Dorsolateral prefrontal cortex (tissue), 120 donors: ENCODE measurements at regions of chr17 and their contacts with region 1.

Region 1: DNA sequence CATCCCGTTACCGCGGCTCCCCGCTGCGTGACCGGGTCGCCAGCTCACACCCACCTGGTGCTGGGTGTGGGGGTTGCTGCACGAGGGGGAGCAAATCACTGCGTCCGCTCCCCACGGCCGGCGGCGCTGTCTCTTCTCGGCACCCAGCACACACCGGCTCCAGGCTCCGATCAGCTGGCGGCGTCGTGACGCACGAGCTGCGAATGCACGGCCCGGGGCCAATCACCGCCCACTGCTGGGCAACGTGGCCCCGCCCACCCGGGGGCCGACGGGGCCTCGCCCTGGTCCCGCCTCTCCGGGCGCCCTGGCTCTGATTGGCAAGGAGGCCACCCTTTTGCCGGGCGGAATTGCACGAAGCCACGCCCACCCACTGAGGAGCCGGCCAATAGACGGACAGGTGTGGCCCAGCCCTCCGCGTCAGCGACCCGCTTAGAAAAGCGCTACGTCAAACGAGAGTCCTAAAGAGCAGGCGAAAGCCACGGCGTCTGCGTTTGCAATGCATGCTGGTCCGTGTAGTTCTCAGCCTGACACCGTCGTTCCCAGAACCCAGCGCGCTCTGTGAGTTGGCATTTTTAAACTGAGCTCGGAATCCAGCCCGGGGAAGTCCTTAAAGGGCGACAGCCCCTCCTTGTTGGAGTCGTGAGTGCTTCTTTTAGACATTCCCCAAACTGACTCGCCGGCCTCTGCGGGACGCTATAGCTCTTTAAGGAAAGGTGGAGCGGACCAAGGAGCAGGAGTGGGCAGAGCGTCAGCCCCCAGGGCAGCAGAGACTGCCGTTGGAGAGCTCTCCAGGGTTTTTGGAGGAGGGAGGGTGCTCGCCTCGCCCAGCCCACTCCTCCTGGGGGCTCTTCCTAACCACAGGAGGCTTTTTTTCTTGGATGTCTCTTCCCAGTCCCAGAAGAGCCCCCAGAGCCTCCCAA is 6.2 kb upstream of the TLCD2 start:
- DNase-seq: peak; percentile 99 to 100 (median 100)
- H3K4me3 ChIP-seq: peak overlapping the region; percentile 62 to 100 (median 93)
- H3K27ac ChIP-seq: peak overlapping the region; percentile 81 to 100 (median 100)
- H3K27me3 ChIP-seq: no peaks in the 10 kb centered on the region
- CTCF ChIP-seq: peak in 26 of 56 donors; percentile 2 to 49 (median 24)

Region 2: GRCh38 chr17:1561400-1562175 is 154.7 kb before region 1 on chr17:
- intact Hi-C with region 1: loop called (anchors 5 to 10 kb)
- DNase-seq: no peak
- H3K4me3 ChIP-seq: peak overlapping the region; percentile 49 to 94 (median 75)
- H3K27ac ChIP-seq: peak overlapping the region in 51 of 59 donors; percentile 9 to 91 (median 69)
- H3K27me3 ChIP-seq: no peaks in the 10 kb centered on the region
- CTCF ChIP-seq: peak in 9 of 56 donors; percentile 6 to 27 (median 12)

Region 3: GRCh38 chr17:1573916-1574696 is 142.2 kb before region 1 on chr17:
- intact Hi-C with region 1: loop called (anchors 5 to 10 kb)
- DNase-seq: peak in 9 of 10 donors; percentile 71 to 87 (median 80)
- H3K4me3 ChIP-seq: peak overlapping the region in 3 of 59 donors; percentile 7 to 21 (median 14)
- H3K27ac ChIP-seq: peak overlapping the region in 55 of 59 donors; percentile 3 to 93 (median 73)
- H3K27me3 ChIP-seq: no peaks in the 10 kb centered on the region
- CTCF ChIP-seq: peak; percentile 58 to 97 (median 93)

Region 4: GRCh38 chr17:1628856-1629646 is 87.3 kb before region 1 on chr17:
- intact Hi-C with region 1: no loop called
- DNase-seq: peak; percentile 96 to 98 (median 97)
- H3K4me3 ChIP-seq: peak overlapping the region; percentile 63 to 97 (median 88)
- H3K27ac ChIP-seq: peak overlapping the region; percentile 84 to 99 (median 98)
- H3K27me3 ChIP-seq: no peaks in the 10 kb centered on the region
- CTCF ChIP-seq: peak in 50 of 56 donors; percentile 6 to 74 (median 51)

Region 5: GRCh38 chr17:1648963-1649843 is 67.1 kb before region 1 on chr17:
- intact Hi-C with region 1: loop called in 1 of 2 experiments (anchors 5 kb)
- DNase-seq: peak; percentile 90 to 95 (median 92)
- H3K4me3 ChIP-seq: peak overlapping the region; percentile 58 to 92 (median 75)
- H3K27ac ChIP-seq: peak overlapping the region; percentile 59 to 99 (median 94)
- H3K27me3 ChIP-seq: no peaks in the 10 kb centered on the region
- CTCF ChIP-seq: peak in 52 of 56 donors; percentile 63 to 97 (median 81)

Region 6: GRCh38 chr17:1684378-1685189 is 31.8 kb before region 1 on chr17 and contains the start of gene PRPF8:
- intact Hi-C with region 1: loop called (anchors 2 to 5 kb)
- DNase-seq: peak; percentile 94 to 99 (median 98)
- H3K4me3 ChIP-seq: peak within 1 kb of the TSS; percentile 66 to 99 (median 92)
- H3K27ac ChIP-seq: peak within 1 kb of the TSS; percentile 3 to 98 (median 90)
- H3K27me3 ChIP-seq: no peaks in the 10 kb centered on the region
- CTCF ChIP-seq: peak in 33 of 56 donors; percentile 5 to 56 (median 31)
- total RNA-seq, gene PRPF8: 220 to 305 (median 265) TPM

Region 7: GRCh38 chr17:1829592-1830257 is 113.4 kb after region 1 on chr17 and contains the starts of genes RPA1 and SMYD4:
- intact Hi-C with region 1: loop called in 1 of 2 experiments (anchors 2 kb)
- DNase-seq: peak; percentile 80 to 96 (median 86)
- H3K4me3 ChIP-seq: peak within 1 kb of the TSS; percentile 53 to 97 (median 86)
- H3K27ac ChIP-seq: peak within 1 kb of the TSS in 55 of 59 donors; percentile 36 to 89 (median 74)
- H3K27me3 ChIP-seq: no peaks in the 10 kb centered on the region
- CTCF ChIP-seq: peak in 14 of 56 donors; percentile 7 to 57 (median 16)
- total RNA-seq, gene RPA1: 54.2 to 102 (median 73.3) TPM
- total RNA-seq, gene SMYD4: 13.6 to 30.4 (median 20.5) TPM

Region 8: DNA sequence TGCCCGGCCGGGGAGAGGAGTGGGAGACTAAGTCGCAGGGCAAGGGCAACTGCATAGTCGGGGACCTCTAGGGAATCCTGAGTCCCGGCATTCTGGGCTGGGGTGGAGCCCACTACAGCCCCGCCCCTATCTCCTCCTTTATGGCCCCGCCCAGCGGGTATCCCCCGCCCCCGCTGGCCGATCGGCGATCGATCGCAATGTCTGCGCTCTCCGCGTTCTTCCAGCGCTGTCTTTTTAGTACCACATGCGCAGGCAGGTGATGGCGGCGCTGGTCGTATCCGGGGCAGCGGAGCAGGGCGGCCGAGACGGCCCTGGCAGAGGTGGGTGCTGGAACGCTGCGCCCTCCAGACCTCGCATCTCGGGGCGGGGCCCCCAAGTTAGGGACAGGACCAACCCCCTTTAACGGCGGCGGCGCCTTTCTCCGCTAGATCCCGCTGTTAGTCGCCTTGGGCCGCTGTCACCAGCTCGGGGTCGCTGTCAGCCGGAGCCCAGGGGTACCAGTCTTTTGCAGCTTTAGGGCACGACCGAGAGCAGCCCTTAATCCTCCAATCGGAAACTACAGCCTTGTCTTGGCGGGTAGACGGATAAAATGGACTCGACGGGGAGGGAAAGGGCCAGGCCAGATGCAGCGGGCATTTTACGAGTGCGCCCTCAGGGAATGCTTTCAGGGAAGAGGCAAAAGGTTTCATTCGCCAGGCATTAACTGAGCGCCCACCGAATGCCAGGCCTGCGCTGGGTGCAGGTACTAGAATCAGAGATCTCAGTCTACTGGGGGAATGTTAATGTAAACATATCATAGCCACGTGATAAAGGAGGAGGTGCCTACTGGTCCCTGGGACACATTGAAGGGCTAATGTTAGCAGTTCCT is 313.8 kb after region 1 on chr17 and contains the start of gene DPH1:
- intact Hi-C with region 1: loop called in 1 of 2 experiments (anchors 5 kb)
- DNase-seq: peak; percentile 72 to 94 (median 90)
- H3K4me3 ChIP-seq: peak within 1 kb of the TSS; percentile 63 to 100 (median 95)
- H3K27ac ChIP-seq: peak within 1 kb of the TSS in 57 of 59 donors; percentile 20 to 93 (median 79)
- H3K27me3 ChIP-seq: peaks cover 0 to 21% (median 0%) of the 10 kb centered on the region in 45 donors
- CTCF ChIP-seq: peak in 23 of 56 donors; percentile 4 to 49 (median 24)
- total RNA-seq, gene DPH1: 57.6 to 158 (median 87.2) TPM